ENCODE measurements at regions of chr10 and their contacts with region 1.

Region 1: GRCh38 chr10:69696073-69696731 is 66.2 kb downstream of the FAM241B start:
- DNase-seq: peak; percentile 70
- H3K4me3 Mint-ChIP-seq: no peak overlapping the region
- H3K27ac Mint-ChIP-seq: no peak overlapping the region
- H3K4me1 Mint-ChIP-seq: no peaks in the 10 kb centered on the region
- H3K27me3 Mint-ChIP-seq: peaks cover 24% of the 10 kb centered on the region
- CTCF ChIP-seq: peak; percentile 69

Region 2: GRCh38 chr10:69262292-69262751 is 433.9 kb before region 1 on chr10:
- CTCF ChIA-PET with region 1: no interaction called
- POLR2A ChIA-PET with region 1: no interaction called
- intact Hi-C with region 1: no loop called
- DNase-seq: no peak
- H3K4me3 Mint-ChIP-seq: no peak overlapping the region
- H3K27ac Mint-ChIP-seq: no peak overlapping the region
- H3K4me1 Mint-ChIP-seq: peaks cover 16% of the 10 kb centered on the region
- H3K27me3 Mint-ChIP-seq: no peaks in the 10 kb centered on the region
- CTCF ChIP-seq: no peak

Region 3: DNA sequence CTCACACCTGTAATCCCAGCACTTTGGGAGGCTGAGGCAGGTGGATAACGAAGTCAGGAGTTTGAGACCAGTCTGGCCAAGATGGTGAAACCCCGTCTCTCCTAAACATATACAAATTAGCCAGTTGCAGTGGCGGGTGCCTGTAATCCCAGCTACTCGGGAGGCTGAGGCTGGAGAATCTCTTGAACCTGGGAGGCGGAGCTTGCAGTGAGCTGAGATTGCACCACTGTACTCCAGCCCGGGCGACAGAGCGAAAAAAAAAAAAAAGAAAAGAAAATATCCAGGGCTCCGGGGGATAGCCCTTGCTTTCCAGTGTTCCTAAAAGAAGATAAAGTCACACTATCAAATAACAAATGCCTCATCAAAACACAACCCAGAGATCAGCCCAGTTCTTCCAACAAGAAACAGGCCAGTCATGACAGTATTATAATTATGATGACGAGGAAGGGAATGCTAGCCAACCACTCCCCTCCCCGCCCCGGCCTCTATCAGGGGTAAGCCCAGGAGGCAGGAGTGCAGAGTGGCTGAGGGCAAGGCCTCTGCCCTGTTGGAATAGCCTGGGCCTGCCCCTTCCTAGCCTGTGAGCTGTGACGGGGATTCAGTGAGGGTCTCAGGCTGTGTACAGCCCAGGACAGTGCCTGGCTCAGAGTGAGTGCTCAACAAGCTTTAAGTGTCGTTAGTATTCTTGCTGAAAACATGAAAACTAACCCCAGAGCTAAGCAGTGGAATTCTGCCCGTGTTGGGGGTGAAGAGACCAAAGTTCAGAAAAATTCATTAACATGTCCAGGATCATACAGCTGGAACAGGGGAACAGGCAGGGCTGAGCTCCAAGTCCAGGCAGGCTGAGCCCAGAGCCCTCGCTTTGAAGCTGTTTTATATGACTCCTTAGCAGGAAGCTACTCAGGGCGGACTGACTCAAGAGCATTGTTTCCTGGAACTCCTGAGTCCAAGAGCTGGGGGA is 11.9 kb before region 1 on chr10:
- CTCF ChIA-PET with region 1: interaction called, 16 read pairs
- POLR2A ChIA-PET with region 1: no interaction called
- intact Hi-C with region 1: no loop called
- DNase-seq: no peak
- H3K4me3 Mint-ChIP-seq: no peak overlapping the region
- H3K27ac Mint-ChIP-seq: no peak overlapping the region
- H3K4me1 Mint-ChIP-seq: peaks cover 5% of the 10 kb centered on the region
- H3K27me3 Mint-ChIP-seq: peaks cover 30% of the 10 kb centered on the region
- CTCF ChIP-seq: no peak